ENCODE measurements at regions of chr4 and their contacts with region 1.

Region 1: DNA sequence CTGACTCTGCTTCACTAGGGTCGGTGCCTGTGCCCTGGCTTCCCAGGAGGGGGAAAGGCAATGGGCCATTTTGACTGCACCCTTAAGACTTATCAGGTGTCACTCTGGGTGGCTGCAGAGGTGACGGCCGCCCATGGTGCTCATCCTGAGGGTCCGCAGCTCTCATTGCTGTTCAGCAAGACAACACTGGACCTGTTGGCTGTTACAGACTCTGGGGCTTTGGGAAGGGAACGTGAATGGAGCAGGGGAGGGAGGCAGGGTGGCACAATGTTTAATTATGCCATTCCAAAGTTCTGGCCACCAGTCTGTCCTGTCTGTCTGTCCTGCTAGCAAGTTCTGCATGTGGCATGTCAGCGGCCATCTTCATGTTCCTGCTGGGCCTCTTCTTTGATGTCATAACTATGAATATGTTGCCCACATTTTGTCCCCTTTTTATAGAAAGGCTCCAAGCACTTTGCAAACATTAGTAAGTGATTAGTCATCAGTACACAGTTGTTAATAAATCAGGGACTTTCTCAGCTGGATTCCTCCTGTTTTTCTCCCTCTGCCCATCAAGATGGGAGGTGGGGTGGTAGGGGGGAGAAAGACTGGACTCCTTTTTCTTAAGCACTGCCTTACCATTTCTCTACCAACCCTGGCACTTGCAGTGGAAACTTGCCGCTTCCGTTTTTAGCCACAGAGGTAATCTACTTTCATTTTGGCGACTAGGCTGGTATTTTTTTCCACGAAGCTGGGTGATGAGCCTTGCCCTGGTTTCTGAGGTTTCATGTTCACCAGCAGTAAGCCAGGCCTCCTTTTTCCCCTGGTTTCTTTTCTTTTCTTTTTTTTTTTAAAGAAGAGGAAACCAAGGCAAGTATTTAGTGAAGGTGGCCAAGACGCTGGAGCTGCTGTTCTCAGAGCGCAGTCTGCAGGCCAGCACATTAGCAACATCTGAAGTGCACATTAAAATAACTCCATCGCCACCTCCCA is 88.6 kb upstream of the TRIM2 start:
- DNase-seq: peak; percentile 88
- ATAC-seq: peak; percentile 64
- H3K4me3 Mint-ChIP-seq: peak overlapping the region; percentile 31
- H3K27ac Mint-ChIP-seq: no peak overlapping the region
- H3K4me1 Mint-ChIP-seq: peaks cover 14% of the 10 kb centered on the region
- H3K27me3 Mint-ChIP-seq: no peaks in the 10 kb centered on the region
- CTCF ChIP-seq: no peak

Region 2: GRCh38 chr4:152779513-152780266 is 335.9 kb before region 1 on chr4 and contains the starts of genes ARFIP1 and TIGD4:
- CTCF ChIA-PET with region 1: interaction called, 3 read pairs
- POLR2A ChIA-PET with region 1: no interaction called
- intact Hi-C with region 1: loop called (anchors 10 kb)
- DNase-seq: peak; percentile 96
- ATAC-seq: peak; percentile 89
- H3K4me3 Mint-ChIP-seq: peak within 1 kb of the TSS; percentile 97
- H3K27ac Mint-ChIP-seq: peak within 1 kb of the TSS; percentile 92
- H3K4me1 Mint-ChIP-seq: peaks cover 38% of the 10 kb centered on the region
- H3K27me3 Mint-ChIP-seq: peaks cover 8% of the 10 kb centered on the region
- CTCF ChIP-seq: no peak
- total RNA-seq, gene ARFIP1: 7.2 to 8.9 TPM
- total RNA-seq, gene TIGD4: 0.27 to 0.47 TPM

Region 3: GRCh38 chr4:152850377-152850776 is 265.2 kb before region 1 on chr4:
- CTCF ChIA-PET with region 1: interaction called, 6 read pairs
- POLR2A ChIA-PET with region 1: no interaction called
- intact Hi-C with region 1: loop called (anchors 5 kb)
- DNase-seq: peak; percentile 68
- ATAC-seq: peak; percentile 79
- H3K4me3 Mint-ChIP-seq: no peak overlapping the region
- H3K27ac Mint-ChIP-seq: peak overlapping the region; percentile 29
- H3K4me1 Mint-ChIP-seq: peaks cover 19% of the 10 kb centered on the region
- H3K27me3 Mint-ChIP-seq: no peaks in the 10 kb centered on the region
- CTCF ChIP-seq: no peak

Region 4: GRCh38 chr4:152937336-152938236 is 178.0 kb before region 1 on chr4:
- CTCF ChIA-PET with region 1: no interaction called
- POLR2A ChIA-PET with region 1: no interaction called
- intact Hi-C with region 1: no loop called
- DNase-seq: peak; percentile 21
- ATAC-seq: peak; percentile 43
- H3K4me3 Mint-ChIP-seq: peak overlapping the region; percentile 65
- H3K27ac Mint-ChIP-seq: no peak overlapping the region
- H3K4me1 Mint-ChIP-seq: peaks cover 17% of the 10 kb centered on the region
- H3K27me3 Mint-ChIP-seq: peaks cover 49% of the 10 kb centered on the region
- CTCF ChIP-seq: no peak

Region 5: GRCh38 chr4:153249199-153250041 is 133.8 kb after region 1 on chr4:
- CTCF ChIA-PET with region 1: no interaction called
- POLR2A ChIA-PET with region 1: no interaction called
- intact Hi-C with region 1: no loop called
- DNase-seq: peak; percentile 86
- ATAC-seq: peak; percentile 99
- H3K4me3 Mint-ChIP-seq: peak overlapping the region; percentile 80
- H3K27ac Mint-ChIP-seq: peak overlapping the region; percentile 81
- H3K4me1 Mint-ChIP-seq: peaks cover 10% of the 10 kb centered on the region
- H3K27me3 Mint-ChIP-seq: no peaks in the 10 kb centered on the region
- CTCF ChIP-seq: no peak

Measured in activated CD8-positive, alpha-beta T cell treated with anti-CD3 and anti-CD28 coated beads for 36 hours (primary cell).